Vagina (tissue), 2 donors: ENCODE measurements at regions of chr13 and their contacts with region 1.

Region 1: DNA sequence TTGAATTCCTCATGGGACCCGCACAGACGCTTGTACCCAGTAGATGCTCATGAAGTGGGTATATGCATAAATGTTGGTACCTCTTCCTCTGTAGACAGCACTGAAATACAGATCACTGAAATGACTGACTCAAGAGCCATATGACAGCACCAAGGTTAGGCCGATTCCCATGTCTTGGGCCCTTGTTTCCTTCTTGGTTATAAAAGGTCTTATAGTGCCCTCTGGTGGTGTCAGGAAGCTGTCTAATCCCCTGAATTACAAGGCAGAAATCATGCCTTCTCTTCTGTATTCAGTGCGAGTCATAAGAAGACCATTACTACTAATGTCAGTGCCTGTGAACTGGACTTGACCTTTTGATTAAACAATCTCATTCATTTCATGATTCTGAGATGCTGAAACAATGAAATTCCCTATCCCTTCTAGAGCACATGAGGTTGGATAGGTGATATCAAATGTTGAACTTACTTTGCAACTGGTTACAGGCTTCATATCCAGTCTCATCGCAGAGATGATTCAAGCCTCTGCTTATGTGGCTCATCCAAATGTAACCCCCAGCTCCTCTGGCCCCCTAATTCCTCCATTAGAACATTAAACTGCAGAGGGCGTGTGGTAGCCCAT is 59.7 kb downstream of the SPATA13 start:
- DNase-seq: no peak
- H3K4me3 ChIP-seq: no peak overlapping the region
- H3K27ac ChIP-seq: peak overlapping the region; percentile 54
- H3K4me1 ChIP-seq: peaks cover 23% of the 10 kb centered on the region
- H3K27me3 ChIP-seq: no peaks in the 10 kb centered on the region
- CTCF ChIP-seq: peak; percentile 73 to 88 (median 77)
- POLR2A ChIP-seq: no peak

Region 2: GRCh38 chr13:23915308-23915707 is 304.9 kb before region 1 on chr13:
- intact Hi-C with region 1: loop called (anchors 10 kb)
- DNase-seq: no peak
- H3K4me3 ChIP-seq: no peak overlapping the region
- H3K27ac ChIP-seq: no peak overlapping the region
- H3K4me1 ChIP-seq: no peaks in the 10 kb centered on the region
- H3K27me3 ChIP-seq: no peaks in the 10 kb centered on the region
- CTCF ChIP-seq: no peak
- POLR2A ChIP-seq: no peak

Region 3: DNA sequence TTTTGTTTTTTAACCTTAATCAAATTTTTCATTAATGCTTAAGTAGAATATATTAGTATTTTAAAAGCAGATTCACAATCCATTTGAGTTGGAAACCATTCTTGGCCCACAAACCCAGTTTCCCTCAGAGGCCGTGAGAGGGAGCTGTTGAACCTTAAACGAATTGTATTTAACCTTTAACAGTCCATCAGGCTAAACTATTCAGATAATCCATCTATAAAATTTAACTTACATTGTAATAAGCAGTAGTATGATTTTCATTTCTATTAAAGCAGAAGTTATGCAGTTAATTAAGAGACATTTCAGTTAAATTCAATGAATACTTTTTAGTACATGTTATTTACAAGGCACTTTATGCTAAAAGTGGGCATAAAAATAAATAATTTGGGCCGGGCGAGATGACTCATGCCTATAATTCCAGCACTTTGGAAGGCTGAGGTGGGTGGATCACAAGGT is 199.8 kb before region 1 on chr13:
- intact Hi-C with region 1: loop called (anchors 5 kb)
- DNase-seq: peak in 1 of 2 donors; percentile 44
- H3K4me3 ChIP-seq: no peak overlapping the region
- H3K27ac ChIP-seq: no peak overlapping the region
- H3K4me1 ChIP-seq: no peaks in the 10 kb centered on the region
- H3K27me3 ChIP-seq: no peaks in the 10 kb centered on the region
- CTCF ChIP-seq: peak; percentile 53 to 85 (median 55)
- POLR2A ChIP-seq: no peak